Panc1 (cell line): ENCODE measurements at regions of chr12 and their contacts with region 1.

Region 1: DNA sequence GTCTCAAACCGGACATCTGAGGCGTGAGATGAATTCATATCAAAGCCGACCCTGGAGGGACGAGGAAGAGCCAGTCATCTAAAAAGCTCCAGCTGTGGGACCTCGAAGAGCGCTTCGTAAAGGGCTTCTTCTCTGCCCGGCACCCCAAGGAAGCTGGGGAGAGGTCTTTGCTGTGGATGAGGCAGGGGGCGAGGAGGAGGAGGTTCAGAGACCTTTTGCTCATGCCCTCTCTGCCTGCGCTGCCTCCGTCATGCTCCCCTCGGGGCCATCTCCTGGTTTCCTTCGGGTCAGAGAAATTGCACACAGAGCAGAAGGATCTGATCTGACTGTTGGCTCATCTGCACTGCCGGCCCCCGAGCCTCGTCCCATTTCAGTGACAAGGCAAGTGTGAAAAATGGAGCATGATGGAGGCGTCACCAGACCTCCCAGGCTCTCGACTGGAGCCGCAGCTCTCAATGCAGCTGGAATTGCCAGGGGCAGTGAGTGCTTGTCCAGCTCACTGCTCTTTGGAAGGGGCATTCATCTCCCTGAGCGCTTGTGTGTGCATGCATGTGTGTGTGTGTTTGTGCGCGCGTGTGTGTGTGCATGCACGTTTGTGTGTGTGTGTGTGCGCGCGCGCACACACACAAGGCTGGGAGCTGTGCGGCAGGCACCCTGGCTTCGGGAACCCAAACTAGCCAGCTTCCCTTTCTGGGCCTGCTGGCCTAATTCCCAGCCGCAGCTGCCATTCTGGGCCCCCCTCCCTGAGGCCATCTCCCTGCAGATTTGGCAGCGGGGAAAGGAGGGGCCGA is 9.2 kb downstream of the CABP1 start:
- DNase-seq: no peak
- ATAC-seq: no peak
- H3K4me3 ChIP-seq: peak overlapping the region in 1 of 2 experiments; percentile 23; a peak in 2 of 4 replicates
- H3K27ac ChIP-seq: no peak overlapping the region
- H3K4me1 ChIP-seq: peaks cover 8% of the 10 kb centered on the region
- H3K27me3 ChIP-seq: peaks cover 4% of the 10 kb centered on the region
- CTCF ChIP-seq: no peak; the same call in none of the 2 replicates

Region 2: DNA sequence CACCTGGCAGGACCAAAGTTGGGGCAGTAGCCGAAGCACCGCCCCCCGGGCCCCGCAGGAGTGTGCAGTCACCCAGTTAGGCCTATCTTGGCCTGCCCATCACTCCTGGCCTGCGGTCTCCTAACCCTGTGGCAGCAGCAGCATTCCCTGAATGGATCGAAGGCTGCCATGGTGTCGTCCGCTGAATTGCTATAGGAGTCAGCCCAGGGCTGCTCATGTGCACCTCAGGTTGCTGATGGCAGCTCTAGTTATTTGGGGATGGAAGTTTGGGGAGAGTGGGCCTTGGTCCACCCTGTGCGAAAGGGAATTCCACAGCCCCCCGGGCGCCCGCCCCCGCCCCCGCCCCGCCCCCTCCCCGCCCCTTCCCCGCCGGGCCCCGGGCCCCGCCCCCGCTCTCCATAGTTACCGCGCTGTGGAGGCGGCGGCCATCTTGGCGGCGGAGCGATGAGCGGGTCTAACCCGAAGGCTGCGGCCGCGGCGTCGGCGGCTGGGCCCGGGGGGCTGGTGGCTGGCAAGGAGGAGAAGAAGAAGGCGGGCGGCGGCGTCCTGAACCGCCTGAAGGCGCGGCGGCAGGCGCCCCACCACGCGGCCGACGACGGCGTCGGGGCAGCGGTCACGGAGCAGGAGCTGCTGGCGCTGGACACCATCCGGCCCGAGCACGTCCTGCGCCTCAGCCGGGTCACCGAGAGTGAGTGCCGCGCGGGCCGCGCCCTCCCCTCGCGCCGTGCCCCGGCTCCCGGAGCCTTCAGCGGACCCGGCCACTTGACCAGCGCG is 60.6 kb after region 1 on chr12 and contains the start of gene UNC119B:
- CTCF ChIA-PET with region 1: interaction called, 4 read pairs
- POLR2A ChIA-PET with region 1: interaction called, 4 read pairs
- in situ Hi-C with region 1: no loop called
- intact Hi-C with region 1: loop called (anchors 5 kb)
- DNase-seq: no peak
- ATAC-seq: peak; percentile 94
- H3K4me3 ChIP-seq: peak within 1 kb of the TSS; percentile 77 to 86
- H3K27ac ChIP-seq: peak within 1 kb of the TSS; percentile 80
- H3K4me1 ChIP-seq: peaks cover 15% of the 10 kb centered on the region
- H3K27me3 ChIP-seq: no peaks in the 10 kb centered on the region
- CTCF ChIP-seq: no peak
- total RNA-seq, gene UNC119B: 26.0 TPM